ENCODE measurements at regions of chr1 and their contacts with region 1.

Region 1: GRCh38 chr1:169106095-169106920 is at the start of gene ATP1B1:
- DNase-seq: peak; percentile 66 to 90 (median 76)
- ATAC-seq: peak; percentile 95
- H3K4me3 ChIP-seq: peak within 1 kb of the TSS; percentile 67
- H3K4me3 Mint-ChIP-seq: peak within 1 kb of the TSS; percentile 81 to 93 (median 88)
- H3K27ac ChIP-seq: peak within 1 kb of the TSS; percentile 58
- H3K27ac Mint-ChIP-seq: peak within 1 kb of the TSS in 8 of 9 donors; percentile 29 to 85 (median 56)
- H3K4me1 ChIP-seq: peaks cover 7 to 21% of the 10 kb centered on the region in 2 donors
- H3K4me1 Mint-ChIP-seq: peaks cover 24 to 48% (median 40%) of the 10 kb centered on the region in 7 donors
- H3K27me3 ChIP-seq: no peaks in the 10 kb centered on the region
- H3K27me3 Mint-ChIP-seq: peaks cover 0 to 19% (median 0%) of the 10 kb centered on the region in 5 donors
- total RNA-seq, gene ATP1B1: 1.8 to 10.6 (median 2.3) TPM

Region 2: GRCh38 chr1:168225476-168226190 is 880.7 kb before region 1 on chr1 and contains the start of gene SFT2D2:
- CTCF ChIA-PET with region 1: no interaction called
- POLR2A ChIA-PET with region 1: no interaction called
- intact Hi-C with region 1: loop called in 1 of 2 experiments (anchors 5 kb)
- DNase-seq: peak; percentile 71 to 86 (median 83)
- ATAC-seq: peak; percentile 97
- H3K4me3 ChIP-seq: peak within 1 kb of the TSS; percentile 88
- H3K4me3 Mint-ChIP-seq: peak within 1 kb of the TSS; percentile 92 to 98 (median 96)
- H3K27ac ChIP-seq: peak within 1 kb of the TSS; percentile 85
- H3K27ac Mint-ChIP-seq: peak within 1 kb of the TSS; percentile 81 to 98 (median 92)
- H3K4me1 ChIP-seq: peaks cover 14 to 15% of the 10 kb centered on the region in 2 donors
- H3K4me1 Mint-ChIP-seq: peaks cover 30 to 56% (median 45%) of the 10 kb centered on the region in 7 donors
- H3K27me3 ChIP-seq: no peaks in the 10 kb centered on the region
- H3K27me3 Mint-ChIP-seq: peaks cover 0 to 7% (median 4%) of the 10 kb centered on the region in 5 donors
- total RNA-seq, gene SFT2D2: 46.9 to 79.8 (median 51.3) TPM

Region 3: GRCh38 chr1:168428063-168428731 is 678.1 kb before region 1 on chr1:
- CTCF ChIA-PET with region 1: no interaction called
- POLR2A ChIA-PET with region 1: no interaction called
- intact Hi-C with region 1: loop called in 1 of 2 experiments (anchors 10 kb)
- DNase-seq: no peak
- ATAC-seq: no peak
- H3K4me3 ChIP-seq: no peak overlapping the region
- H3K4me3 Mint-ChIP-seq: no peak overlapping the region
- H3K27ac ChIP-seq: no peak overlapping the region
- H3K27ac Mint-ChIP-seq: peak overlapping the region in 1 of 9 donors; percentile 7
- H3K4me1 ChIP-seq: peaks cover 0 to under 1% of the 10 kb centered on the region in 2 donors
- H3K4me1 Mint-ChIP-seq: peaks cover 0 to 10% (median 0%) of the 10 kb centered on the region in 7 donors
- H3K27me3 ChIP-seq: no peaks in the 10 kb centered on the region
- H3K27me3 Mint-ChIP-seq: peaks cover 0 to 5% (median 0%) of the 10 kb centered on the region in 5 donors

Region 4: DNA sequence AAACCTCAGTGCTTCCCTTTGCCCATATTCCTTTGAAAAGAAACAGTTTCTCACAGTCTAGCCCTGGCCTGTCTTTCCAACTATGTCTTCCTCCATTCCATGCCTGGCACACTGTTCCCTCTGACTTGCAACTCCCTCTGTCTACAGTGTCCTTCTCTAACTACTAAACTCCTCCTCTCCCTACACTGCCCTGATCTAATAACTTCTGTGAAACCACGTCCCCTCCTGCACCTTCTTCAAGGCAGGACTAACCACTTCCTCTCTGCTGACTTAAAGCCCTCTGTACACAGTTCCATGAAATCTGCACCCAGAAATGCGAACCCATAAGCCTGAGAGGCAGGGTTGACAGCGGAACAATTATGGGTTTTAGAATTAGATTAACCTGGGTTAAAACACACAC is 62.0 kb before region 1 on chr1:
- CTCF ChIA-PET with region 1: no interaction called
- POLR2A ChIA-PET with region 1: no interaction called
- intact Hi-C with region 1: loop called (anchors 1 to 2 kb)
- DNase-seq: peak in 8 of 9 donors; percentile 10 to 65 (median 56)
- ATAC-seq: peak; percentile 93
- H3K4me3 ChIP-seq: peak overlapping the region; percentile 0
- H3K4me3 Mint-ChIP-seq: peak overlapping the region; percentile 59 to 84 (median 72)
- H3K27ac ChIP-seq: no peak overlapping the region
- H3K27ac Mint-ChIP-seq: peak overlapping the region; percentile 16 to 85 (median 73)
- H3K4me1 ChIP-seq: peaks cover 16 to 30% of the 10 kb centered on the region in 2 donors
- H3K4me1 Mint-ChIP-seq: peaks cover 25 to 64% (median 49%) of the 10 kb centered on the region in 7 donors
- H3K27me3 ChIP-seq: no peaks in the 10 kb centered on the region
- H3K27me3 Mint-ChIP-seq: no peaks in the 10 kb centered on the region

Region 5: GRCh38 chr1:169348383-169349036 is 242.2 kb after region 1 on chr1:
- CTCF ChIA-PET with region 1: no interaction called
- POLR2A ChIA-PET with region 1: no interaction called
- intact Hi-C with region 1: loop called in 1 of 2 experiments (anchors 5 kb)
- DNase-seq: peak in 7 of 9 donors; percentile 12 to 56 (median 39)
- ATAC-seq: peak; percentile 60
- H3K4me3 ChIP-seq: no peak overlapping the region
- H3K4me3 Mint-ChIP-seq: no peak overlapping the region
- H3K27ac ChIP-seq: no peak overlapping the region
- H3K27ac Mint-ChIP-seq: no peak overlapping the region
- H3K4me1 ChIP-seq: no peaks in the 10 kb centered on the region
- H3K4me1 Mint-ChIP-seq: peaks cover 0 to 18% (median 8%) of the 10 kb centered on the region in 7 donors
- H3K27me3 ChIP-seq: no peaks in the 10 kb centered on the region
- H3K27me3 Mint-ChIP-seq: peaks cover 0 to 3% (median 0%) of the 10 kb centered on the region in 5 donors

Region 6: GRCh38 chr1:170531758-170532657 is 1425.7 kb after region 1 on chr1 and contains the start of gene GORAB:
- CTCF ChIA-PET with region 1: no interaction called
- POLR2A ChIA-PET with region 1: no interaction called
- intact Hi-C with region 1: loop called in 1 of 2 experiments (anchors 1 kb)
- DNase-seq: peak; percentile 74 to 87 (median 83)
- ATAC-seq: peak; percentile 97
- H3K4me3 ChIP-seq: peak within 1 kb of the TSS; percentile 95
- H3K4me3 Mint-ChIP-seq: no peak within 1 kb of the TSS
- H3K27ac ChIP-seq: peak within 1 kb of the TSS; percentile 91
- H3K27ac Mint-ChIP-seq: peak within 1 kb of the TSS in 1 of 9 donors; percentile 36
- H3K4me1 ChIP-seq: peaks cover 8 to 14% of the 10 kb centered on the region in 2 donors
- H3K4me1 Mint-ChIP-seq: peaks cover 7 to 29% (median 19%) of the 10 kb centered on the region in 7 donors
- H3K27me3 ChIP-seq: no peaks in the 10 kb centered on the region
- H3K27me3 Mint-ChIP-seq: peaks cover 0 to 20% (median 0%) of the 10 kb centered on the region in 5 donors
- total RNA-seq, gene GORAB: 10.9 to 25.3 (median 22.7) TPM

Measured in naive thymus-derived CD4-positive, alpha-beta T cell (primary cell).